CD4-positive, alpha-beta T cell (primary cell): ENCODE measurements at regions of chr9 and their contacts with region 1.

Region 1: GRCh38 chr9:70602321-70603019 is 188.0 kb upstream of the KLF9 start:
- DNase-seq: peak; percentile 8 to 77 (median 28)
- ATAC-seq: peak; percentile 70
- H3K4me3 ChIP-seq: no peak overlapping the region
- H3K4me3 Mint-ChIP-seq: no peak overlapping the region
- H3K27ac ChIP-seq: no peak overlapping the region
- H3K27ac Mint-ChIP-seq: no peak overlapping the region
- H3K4me1 ChIP-seq: peaks cover 4% of the 10 kb centered on the region
- H3K4me1 Mint-ChIP-seq: peaks cover 5% of the 10 kb centered on the region
- H3K27me3 ChIP-seq: no peaks in the 10 kb centered on the region
- H3K27me3 Mint-ChIP-seq: no peaks in the 10 kb centered on the region
- CTCF ChIP-seq: peak; percentile 88

Region 2: GRCh38 chr9:69971643-69972449 is 630.6 kb before region 1 on chr9:
- CTCF ChIA-PET with region 1: interaction called, 4 read pairs
- POLR2A ChIA-PET with region 1: no interaction called
- intact Hi-C with region 1: loop called in 1 of 2 experiments (anchors 5 kb)
- DNase-seq: peak; percentile 1 to 59 (median 22)
- ATAC-seq: no peak
- H3K4me3 ChIP-seq: no peak overlapping the region
- H3K4me3 Mint-ChIP-seq: no peak overlapping the region
- H3K27ac ChIP-seq: no peak overlapping the region
- H3K27ac Mint-ChIP-seq: no peak overlapping the region
- H3K4me1 ChIP-seq: no peaks in the 10 kb centered on the region
- H3K4me1 Mint-ChIP-seq: no peaks in the 10 kb centered on the region
- H3K27me3 ChIP-seq: no peaks in the 10 kb centered on the region
- H3K27me3 Mint-ChIP-seq: peaks cover 12% of the 10 kb centered on the region
- CTCF ChIP-seq: peak; percentile 55

Region 3: GRCh38 chr9:70324963-70325362 is 277.5 kb before region 1 on chr9:
- CTCF ChIA-PET with region 1: no interaction called
- POLR2A ChIA-PET with region 1: no interaction called
- intact Hi-C with region 1: no loop called
- DNase-seq: no peak
- ATAC-seq: no peak
- H3K4me3 ChIP-seq: no peak overlapping the region
- H3K4me3 Mint-ChIP-seq: no peak overlapping the region
- H3K27ac ChIP-seq: no peak overlapping the region
- H3K27ac Mint-ChIP-seq: no peak overlapping the region
- H3K4me1 ChIP-seq: no peaks in the 10 kb centered on the region
- H3K4me1 Mint-ChIP-seq: no peaks in the 10 kb centered on the region
- H3K27me3 ChIP-seq: no peaks in the 10 kb centered on the region
- H3K27me3 Mint-ChIP-seq: no peaks in the 10 kb centered on the region
- CTCF ChIP-seq: no peak

Region 4: DNA sequence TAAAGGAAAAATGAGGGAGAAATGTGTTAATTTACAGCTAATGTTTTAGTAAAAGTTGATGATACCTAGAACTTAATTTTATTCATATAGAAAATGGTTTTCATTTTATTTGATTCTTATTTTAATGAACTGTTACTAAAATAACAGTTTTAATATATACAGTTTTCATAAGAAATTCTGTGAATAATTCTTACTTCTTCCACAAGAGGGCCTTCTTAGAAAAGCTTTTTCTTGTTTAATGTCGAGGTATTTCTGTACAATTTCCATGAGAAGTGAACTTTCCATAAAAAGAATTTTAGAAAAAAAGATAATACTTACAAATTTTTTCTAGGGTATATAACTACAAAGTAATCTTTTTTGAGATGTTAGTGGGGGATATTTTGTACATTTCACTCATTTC is 261.9 kb before region 1 on chr9:
- CTCF ChIA-PET with region 1: interaction called, 25 read pairs
- POLR2A ChIA-PET with region 1: interaction called, 7 read pairs
- intact Hi-C with region 1: loop called (anchors 1 kb)
- DNase-seq: peak in 3 of 14 experiments; percentile 38 to 52 (median 42)
- ATAC-seq: no peak
- H3K4me3 ChIP-seq: no peak overlapping the region
- H3K4me3 Mint-ChIP-seq: no peak overlapping the region
- H3K27ac ChIP-seq: no peak overlapping the region
- H3K27ac Mint-ChIP-seq: no peak overlapping the region
- H3K4me1 ChIP-seq: no peaks in the 10 kb centered on the region
- H3K4me1 Mint-ChIP-seq: peaks cover 7% of the 10 kb centered on the region
- H3K27me3 ChIP-seq: no peaks in the 10 kb centered on the region
- H3K27me3 Mint-ChIP-seq: no peaks in the 10 kb centered on the region
- CTCF ChIP-seq: peak; percentile 66

Region 5: DNA sequence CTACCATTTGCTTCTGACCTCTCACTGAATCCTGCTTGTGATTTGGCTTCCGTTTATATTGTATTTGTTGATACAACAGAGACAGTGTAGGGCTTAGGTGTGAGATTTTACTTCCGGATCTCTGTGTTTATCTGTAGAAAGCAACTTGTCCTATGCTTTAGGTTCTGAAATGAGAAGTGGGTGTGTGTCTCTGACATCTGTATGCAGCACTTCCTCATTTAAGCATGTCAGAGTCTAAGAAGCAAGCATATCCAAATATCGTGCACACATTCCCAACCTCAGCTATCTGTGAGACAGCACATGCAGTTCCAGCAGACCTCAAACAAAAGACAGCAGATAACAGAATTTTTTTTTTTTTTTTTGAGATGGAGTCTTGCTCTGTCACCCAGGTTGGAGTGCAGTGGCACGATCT is 204.3 kb before region 1 on chr9:
- CTCF ChIA-PET with region 1: interaction called, 4 read pairs
- POLR2A ChIA-PET with region 1: interaction called, 3 read pairs
- intact Hi-C with region 1: loop called in 1 of 2 experiments (anchors 5 kb)
- DNase-seq: peak in 3 of 14 experiments; percentile 66 to 84 (median 70)
- ATAC-seq: peak; percentile 90
- H3K4me3 ChIP-seq: peak overlapping the region; percentile 7
- H3K4me3 Mint-ChIP-seq: peak overlapping the region; percentile 57
- H3K27ac ChIP-seq: peak overlapping the region; percentile 47 to 51
- H3K27ac Mint-ChIP-seq: peak overlapping the region; percentile 74
- H3K4me1 ChIP-seq: peaks cover 67% of the 10 kb centered on the region
- H3K4me1 Mint-ChIP-seq: peaks cover 75% of the 10 kb centered on the region
- H3K27me3 ChIP-seq: no peaks in the 10 kb centered on the region
- H3K27me3 Mint-ChIP-seq: no peaks in the 10 kb centered on the region
- CTCF ChIP-seq: no peak

Region 6: DNA sequence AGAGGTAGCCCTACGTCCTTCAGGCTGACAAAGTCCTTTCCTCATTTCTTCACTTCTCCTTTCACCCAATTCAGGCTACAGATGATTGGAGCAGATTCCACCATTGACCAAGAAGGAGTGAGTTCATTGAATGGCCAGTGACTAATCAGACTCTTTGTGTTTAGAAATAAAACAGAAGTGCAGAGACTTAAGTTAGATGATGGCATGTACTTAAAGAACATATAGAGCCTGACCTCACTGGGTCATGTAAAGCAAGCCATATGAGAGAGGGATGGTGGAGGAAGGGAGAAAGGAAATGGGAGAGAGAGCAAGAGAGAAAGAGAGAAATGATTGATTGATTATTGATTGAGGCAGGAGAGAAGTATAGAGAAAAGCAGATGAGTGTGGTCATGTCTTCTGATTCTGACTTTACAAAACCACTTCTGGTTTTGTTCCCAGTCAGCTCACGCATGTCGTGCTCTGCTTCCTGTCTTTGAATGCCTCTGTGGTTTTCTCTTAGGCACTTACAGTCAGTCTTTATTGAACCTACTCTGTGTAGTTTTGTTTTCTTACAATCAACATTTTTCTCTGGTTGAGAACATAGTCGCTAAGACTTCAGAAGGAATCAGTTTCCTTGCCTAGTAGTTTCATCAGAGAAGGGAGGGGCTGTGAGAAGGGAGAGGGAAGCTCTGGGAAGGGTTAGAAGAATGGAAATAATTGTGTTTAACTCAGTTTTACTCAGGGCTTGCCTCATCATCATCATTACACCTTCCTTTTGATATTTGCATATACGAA is 38.9 kb before region 1 on chr9:
- CTCF ChIA-PET with region 1: interaction called, 6 read pairs
- POLR2A ChIA-PET with region 1: interaction called, 11 read pairs
- intact Hi-C with region 1: loop called in 1 of 2 experiments (anchors 5 kb)
- DNase-seq: peak; percentile 7 to 83 (median 37)
- ATAC-seq: peak; percentile 93
- H3K4me3 ChIP-seq: peak overlapping the region; percentile 23
- H3K4me3 Mint-ChIP-seq: peak overlapping the region; percentile 67
- H3K27ac ChIP-seq: peak overlapping the region; percentile 57 to 72
- H3K27ac Mint-ChIP-seq: peak overlapping the region; percentile 86
- H3K4me1 ChIP-seq: peaks cover 30% of the 10 kb centered on the region
- H3K4me1 Mint-ChIP-seq: peaks cover 52% of the 10 kb centered on the region
- H3K27me3 ChIP-seq: no peaks in the 10 kb centered on the region
- H3K27me3 Mint-ChIP-seq: no peaks in the 10 kb centered on the region
- CTCF ChIP-seq: no peak

Region 7: DNA sequence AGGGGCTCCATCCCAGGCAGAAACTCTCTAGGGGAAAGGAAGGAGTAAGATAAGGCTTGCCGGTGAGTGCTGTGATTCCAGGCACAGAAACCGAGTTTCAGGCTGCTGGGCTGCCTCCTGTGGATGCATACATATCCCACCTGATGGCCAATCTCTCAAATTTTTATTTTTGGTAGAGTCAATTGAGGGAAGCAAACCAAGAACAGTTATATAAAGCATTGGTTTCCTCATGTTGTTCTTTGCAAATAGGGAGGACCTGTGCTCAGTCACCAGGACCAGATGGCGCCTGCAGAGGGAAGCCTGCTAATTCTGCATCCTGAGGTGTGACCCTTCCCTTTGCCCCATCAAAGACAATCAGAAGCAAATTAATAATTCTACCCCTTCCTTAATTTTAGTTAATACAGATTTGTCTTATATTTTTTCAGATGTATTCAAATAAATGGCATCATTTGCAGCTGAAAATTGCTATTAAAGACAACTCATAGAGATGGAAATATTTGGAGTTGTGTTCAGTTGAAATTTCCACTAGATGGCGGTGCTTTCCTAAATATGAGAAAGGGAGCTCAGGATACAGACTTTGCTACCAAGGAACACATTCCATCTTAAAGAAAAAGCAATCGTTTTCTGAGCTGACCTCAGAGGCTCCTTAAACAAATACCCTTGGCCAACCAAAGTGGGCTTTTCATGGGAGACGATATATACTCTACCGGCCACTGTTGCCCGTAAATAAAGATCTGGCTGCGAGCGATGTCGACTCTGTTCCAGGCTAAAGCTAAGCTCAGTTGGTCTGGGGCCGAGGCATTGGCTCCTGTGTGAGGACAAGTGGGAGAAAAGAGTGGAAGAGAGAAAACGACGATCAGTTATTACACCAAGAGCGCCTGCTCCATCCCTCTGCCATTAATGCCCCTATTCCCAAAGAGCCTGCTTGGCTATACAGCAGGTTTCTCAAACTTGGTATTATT is 37.7 kb after region 1 on chr9:
- CTCF ChIA-PET with region 1: no interaction called
- POLR2A ChIA-PET with region 1: no interaction called
- intact Hi-C with region 1: no loop called
- DNase-seq: peak in 4 of 14 experiments; percentile 15 to 41 (median 32)
- ATAC-seq: no peak
- H3K4me3 ChIP-seq: no peak overlapping the region
- H3K4me3 Mint-ChIP-seq: no peak overlapping the region
- H3K27ac ChIP-seq: no peak overlapping the region
- H3K27ac Mint-ChIP-seq: no peak overlapping the region
- H3K4me1 ChIP-seq: no peaks in the 10 kb centered on the region
- H3K4me1 Mint-ChIP-seq: no peaks in the 10 kb centered on the region
- H3K27me3 ChIP-seq: peaks cover 0 to 8% of the 10 kb centered on the region in 2 experiments
- H3K27me3 Mint-ChIP-seq: peaks cover 28% of the 10 kb centered on the region
- CTCF ChIP-seq: no peak